Right ventricle myocardium inferior (tissue), 1 donor: ENCODE measurements at regions of chr12 and their contacts with region 1.

Region 1: GRCh38 chr12:58302485-58303011 is 361.2 kb downstream of the ATP23 start:
- DNase-seq: no peak
- ATAC-seq: no peak

Region 2: GRCh38 chr12:58176296-58176869 is 126.2 kb before region 1 on chr12:
- intact Hi-C with region 1: loop called (anchors 10 kb)
- DNase-seq: no peak
- ATAC-seq: no peak